Activated CD8-positive, alpha-beta T cell treated with anti-CD3 and anti-CD28 coated beads, Interleukin-2, amount 10 ng/mL, durations not matched to agents 7 days and 5 days (primary cell): ENCODE measurements at regions of chr3 and their contacts with region 1.

Region 1: DNA sequence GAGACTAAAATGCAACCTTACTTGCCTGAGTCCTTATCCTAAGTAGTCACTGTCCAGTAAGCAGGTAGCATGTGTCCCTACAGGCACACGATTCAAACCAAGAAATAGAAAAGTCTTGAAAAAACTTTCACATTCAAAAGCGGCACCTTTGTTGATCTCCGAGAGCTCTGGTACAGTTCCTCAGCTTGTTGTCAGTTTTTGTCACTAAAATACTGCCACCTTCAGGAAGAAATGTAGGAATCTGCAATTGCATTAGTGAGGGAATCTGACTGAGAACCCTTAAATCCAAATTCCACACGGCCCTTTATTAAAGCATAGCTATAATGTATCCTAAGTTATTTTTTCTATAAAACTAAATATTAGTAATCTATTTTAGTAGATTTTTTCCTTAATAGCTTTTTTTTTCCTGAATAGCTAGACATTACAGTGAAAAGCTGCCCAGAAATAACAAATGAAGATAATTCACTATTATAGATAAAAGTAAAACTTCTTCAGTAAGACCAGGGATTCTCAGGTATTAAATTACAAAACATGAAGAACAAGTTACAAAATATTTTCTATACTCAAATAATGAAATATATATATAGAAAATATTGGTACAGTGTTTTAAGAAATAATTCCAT is 44.0 kb downstream of the CCDC54 start:
- DNase-seq: peak; percentile 36
- ATAC-seq: peak; percentile 83
- H3K4me3 Mint-ChIP-seq: no peak overlapping the region
- H3K27ac Mint-ChIP-seq: no peak overlapping the region
- H3K4me1 Mint-ChIP-seq: peaks cover 3% of the 10 kb centered on the region
- H3K27me3 Mint-ChIP-seq: peaks cover 26% of the 10 kb centered on the region

Region 2: GRCh38 chr3:106839576-106840280 is 581.6 kb before region 1 on chr3:
- CTCF ChIA-PET with region 1: no interaction called
- POLR2A ChIA-PET with region 1: no interaction called
- DNase-seq: no peak
- ATAC-seq: no peak
- H3K4me3 Mint-ChIP-seq: no peak overlapping the region
- H3K27ac Mint-ChIP-seq: no peak overlapping the region
- H3K4me1 Mint-ChIP-seq: no peaks in the 10 kb centered on the region
- H3K27me3 Mint-ChIP-seq: peaks cover 4% of the 10 kb centered on the region

Region 3: GRCh38 chr3:107235928-107236315 is 185.4 kb before region 1 on chr3:
- CTCF ChIA-PET with region 1: interaction called, 53 read pairs
- POLR2A ChIA-PET with region 1: no interaction called
- DNase-seq: peak; percentile 70
- ATAC-seq: peak; percentile 51
- H3K4me3 Mint-ChIP-seq: peak overlapping the region; percentile 65
- H3K27ac Mint-ChIP-seq: no peak overlapping the region
- H3K4me1 Mint-ChIP-seq: peaks cover 18% of the 10 kb centered on the region
- H3K27me3 Mint-ChIP-seq: peaks cover 7% of the 10 kb centered on the region

Region 4: DNA sequence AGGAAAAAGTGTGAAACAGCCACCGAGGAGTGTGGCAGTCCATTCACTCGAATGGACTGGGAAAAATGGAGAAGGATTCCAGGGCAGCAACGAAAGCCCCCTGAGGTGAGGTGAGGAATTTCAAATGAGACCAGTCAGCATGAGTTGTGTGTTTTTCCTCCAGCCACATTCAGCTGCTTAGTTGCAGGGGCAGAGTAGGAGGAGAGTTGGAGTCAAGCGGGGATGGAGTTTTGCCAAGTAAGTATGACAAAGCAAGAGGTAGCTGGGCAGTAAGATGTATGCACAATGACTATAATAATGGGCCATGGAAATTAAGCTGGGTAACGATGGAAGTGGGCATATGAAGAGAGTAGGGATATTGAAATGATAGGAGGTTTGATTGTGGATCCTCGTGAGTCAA is 20.3 kb after region 1 on chr3:
- CTCF ChIA-PET with region 1: no interaction called
- POLR2A ChIA-PET with region 1: no interaction called
- DNase-seq: no peak
- ATAC-seq: no peak
- H3K4me3 Mint-ChIP-seq: no peak overlapping the region
- H3K27ac Mint-ChIP-seq: no peak overlapping the region
- H3K4me1 Mint-ChIP-seq: no peaks in the 10 kb centered on the region
- H3K27me3 Mint-ChIP-seq: peaks cover 4% of the 10 kb centered on the region

Region 5: GRCh38 chr3:107522510-107523288 is 101.4 kb after region 1 on chr3 and contains the start of gene BBX:
- CTCF ChIA-PET with region 1: no interaction called
- POLR2A ChIA-PET with region 1: no interaction called
- DNase-seq: peak; percentile 91
- ATAC-seq: peak; percentile 91
- H3K4me3 Mint-ChIP-seq: peak within 1 kb of the TSS; percentile 94
- H3K27ac Mint-ChIP-seq: peak within 1 kb of the TSS; percentile 95
- H3K4me1 Mint-ChIP-seq: peaks cover 26% of the 10 kb centered on the region
- H3K27me3 Mint-ChIP-seq: peaks cover 4% of the 10 kb centered on the region
- total RNA-seq, gene BBX: 27.3 to 30.1 TPM